GM12878 (cell line): ENCODE measurements at regions of chr19 and their contacts with region 1.

Region 1: DNA sequence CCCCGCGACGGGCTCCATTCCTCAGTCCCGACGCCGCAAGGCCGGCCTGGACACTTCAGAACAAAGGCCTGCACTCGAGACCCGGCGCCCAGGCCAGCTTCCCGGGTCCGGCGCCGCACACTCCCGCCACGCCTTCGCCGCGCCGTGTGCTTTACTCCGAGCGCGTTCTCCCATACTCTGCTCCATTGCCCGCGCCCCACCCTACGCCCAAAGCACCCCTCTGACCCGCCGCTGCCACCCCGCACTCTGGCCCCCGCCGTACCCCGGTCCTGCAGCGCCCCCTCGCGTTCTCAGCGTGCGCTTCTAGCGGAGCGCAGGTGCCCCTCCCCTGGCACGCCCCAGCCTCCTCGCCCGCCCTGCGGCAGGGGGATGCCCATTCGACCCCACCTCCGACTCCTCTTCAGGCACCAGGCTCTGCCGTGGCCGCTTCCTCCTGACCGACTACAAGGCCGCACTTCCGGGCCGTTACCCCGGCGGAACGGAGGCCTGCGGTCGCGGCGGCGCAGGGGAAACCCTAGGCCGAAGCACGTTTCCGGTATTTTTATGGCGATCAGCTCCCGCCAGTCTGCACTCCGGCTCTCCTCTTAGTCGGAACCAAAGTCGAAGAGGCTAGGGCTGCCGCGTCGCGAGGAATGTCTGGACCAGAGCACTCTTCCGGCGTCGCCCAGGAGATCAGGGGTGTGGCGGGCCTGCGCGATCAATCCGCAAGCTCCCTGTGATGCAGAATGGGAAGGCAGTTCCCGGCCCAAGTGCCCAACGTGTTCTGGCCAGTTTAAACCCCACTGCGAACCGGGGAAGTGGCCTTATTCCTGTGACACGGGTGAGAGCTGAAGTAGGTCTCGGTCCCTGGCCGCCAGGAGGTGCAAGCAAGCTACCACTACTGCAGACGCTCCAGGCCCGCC is at the start of gene ZBTB45:
- DNase-seq: peak; percentile 92
- ATAC-seq: peak; percentile 86
- H3K4me3 ChIP-seq: peak within 1 kb of the TSS; percentile 89
- H3K27ac ChIP-seq: peak within 1 kb of the TSS; percentile 88
- H3K4me1 ChIP-seq: peaks cover 22% of the 10 kb centered on the region
- H3K27me3 ChIP-seq: no peaks in the 10 kb centered on the region
- CTCF ChIP-seq: peak; percentile 79 to 91 (median 88)
- EP300 ChIP-seq: peak in 1 of 2 experiments; percentile 20; a peak in 1 of 4 replicates
- POLR2A ChIP-seq: peak; percentile 89
- RAD21 ChIP-seq: peak; percentile 80
- polyA plus RNA-seq, gene ZBTB45: 0.29 to 0.33 TPM

Region 2: GRCh38 chr19:58380722-58381466 is 138.7 kb before region 1 on chr19 and contains the start of gene ZNF837:
- CTCF ChIA-PET with region 1: interaction called, 5 read pairs
- POLR2A ChIA-PET with region 1: interaction called, 3 read pairs
- RAD21 ChIA-PET with region 1: interaction called, 5 read pairs
- SMC1A ChIA-PET with region 1: no interaction called
- in situ Hi-C with region 1: no loop called
- intact Hi-C with region 1: loop called (anchors 2 kb)
- DNase-seq: peak; percentile 99
- ATAC-seq: peak; percentile 90
- H3K4me3 ChIP-seq: peak within 1 kb of the TSS; percentile 87
- H3K27ac ChIP-seq: peak within 1 kb of the TSS; percentile 85
- H3K4me1 ChIP-seq: peaks cover 22% of the 10 kb centered on the region
- H3K27me3 ChIP-seq: no peaks in the 10 kb centered on the region
- CTCF ChIP-seq: no peak
- EP300 ChIP-seq: no peak
- POLR2A ChIP-seq: peak; percentile 87
- RAD21 ChIP-seq: no peak
- polyA plus RNA-seq, gene ZNF837: not detected

Region 3: DNA sequence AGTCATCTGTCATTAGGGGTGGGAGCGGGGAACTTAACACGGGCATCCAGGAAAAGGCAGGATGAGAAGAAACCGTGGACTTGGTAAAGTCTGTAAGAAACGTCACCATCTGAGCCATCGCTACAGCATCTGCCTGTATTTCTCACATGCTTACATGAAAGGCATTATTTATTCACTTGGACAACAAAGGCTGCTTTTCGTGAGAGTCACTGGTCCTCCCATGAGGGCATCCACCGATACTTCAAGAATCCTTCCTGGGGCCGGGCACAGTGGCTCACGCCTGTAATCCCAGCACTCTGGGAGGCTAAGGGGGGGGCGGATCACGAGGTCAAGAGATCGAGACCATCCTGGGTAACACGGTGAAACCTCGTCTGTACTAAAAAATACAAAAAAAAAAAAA is 27.3 kb before region 1 on chr19:
- CTCF ChIA-PET with region 1: interaction called, 18 read pairs
- POLR2A ChIA-PET with region 1: interaction called, 14 read pairs
- RAD21 ChIA-PET with region 1: interaction called, 9 read pairs
- SMC1A ChIA-PET with region 1: interaction called, 6 read pairs
- in situ Hi-C with region 1: no loop called
- intact Hi-C with region 1: no loop called
- DNase-seq: no peak
- ATAC-seq: no peak
- H3K4me3 ChIP-seq: no peak overlapping the region
- H3K27ac ChIP-seq: no peak overlapping the region
- H3K4me1 ChIP-seq: peaks cover 25% of the 10 kb centered on the region
- H3K27me3 ChIP-seq: no peaks in the 10 kb centered on the region
- CTCF ChIP-seq: no peak
- EP300 ChIP-seq: no peak
- POLR2A ChIP-seq: no peak
- RAD21 ChIP-seq: no peak

Region 4: DNA sequence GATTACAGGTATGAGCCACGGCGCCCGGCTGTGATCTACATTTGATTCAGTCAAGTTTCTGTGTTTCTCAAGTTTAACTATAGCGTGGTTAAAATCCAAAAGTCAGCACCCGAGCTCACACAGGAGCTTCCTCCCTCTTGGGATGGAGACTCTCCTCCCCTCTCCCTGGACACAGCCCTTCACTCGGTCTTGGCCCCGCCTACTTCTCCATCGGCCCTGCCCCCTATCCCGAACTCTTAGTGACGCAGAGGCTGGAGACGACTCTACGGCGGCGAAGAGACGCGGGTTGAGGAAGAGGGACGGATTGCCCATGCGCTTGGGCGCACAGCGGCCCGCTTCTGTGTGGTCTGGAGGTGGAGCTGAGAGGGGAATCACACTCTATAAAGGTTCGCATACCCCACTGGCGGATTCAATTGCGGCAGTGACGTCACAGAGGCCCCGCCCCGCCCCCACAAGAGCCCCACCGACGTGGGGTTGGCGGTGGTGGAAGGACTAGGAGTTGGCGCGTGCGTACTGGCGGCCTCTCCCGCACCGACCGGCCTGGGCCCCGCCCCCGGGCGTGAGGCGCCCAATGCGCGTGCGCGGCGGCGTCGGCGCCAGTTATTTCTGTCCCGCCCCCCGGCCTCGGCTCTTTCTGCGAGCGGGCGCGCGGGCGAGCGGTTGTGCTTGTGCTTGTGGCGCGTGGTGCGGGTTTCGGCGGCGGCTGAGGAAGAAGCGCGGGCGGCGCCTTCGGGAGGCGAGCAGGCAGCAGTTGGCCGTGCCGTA is 24.4 kb after region 1 on chr19 and contains the start of gene TRIM28:
- CTCF ChIA-PET with region 1: interaction called, 21 read pairs
- POLR2A ChIA-PET with region 1: interaction called, 15 read pairs
- RAD21 ChIA-PET with region 1: interaction called, 25 read pairs
- SMC1A ChIA-PET with region 1: interaction called, 14 read pairs
- in situ Hi-C with region 1: no loop called
- intact Hi-C with region 1: no loop called
- DNase-seq: peak; percentile 96
- ATAC-seq: peak; percentile 99
- H3K4me3 ChIP-seq: peak within 1 kb of the TSS; percentile 92
- H3K27ac ChIP-seq: peak within 1 kb of the TSS; percentile 89
- H3K4me1 ChIP-seq: peaks cover 8% of the 10 kb centered on the region
- H3K27me3 ChIP-seq: no peaks in the 10 kb centered on the region; a peak in 1 of 4 replicates
- CTCF ChIP-seq: no peak
- EP300 ChIP-seq: peak in 1 of 2 experiments; percentile 39; a peak in 1 of 4 replicates
- POLR2A ChIP-seq: peak; percentile 99
- RAD21 ChIP-seq: no peak
- polyA plus RNA-seq, gene TRIM28: 5.0 to 32.5 TPM

Region 5: GRCh38 chr19:58572818-58573657 is 53.4 kb after region 1 on chr19 and contains the start of gene MZF1:
- CTCF ChIA-PET with region 1: interaction called, 67 read pairs
- POLR2A ChIA-PET with region 1: interaction called, 24 read pairs
- RAD21 ChIA-PET with region 1: interaction called, 50 read pairs
- SMC1A ChIA-PET with region 1: interaction called, 43 read pairs
- in situ Hi-C with region 1: no loop called
- intact Hi-C with region 1: loop called (anchors 2 kb)
- DNase-seq: peak; percentile 99
- ATAC-seq: peak; percentile 73
- H3K4me3 ChIP-seq: peak within 1 kb of the TSS; percentile 82
- H3K27ac ChIP-seq: peak within 1 kb of the TSS; percentile 98
- H3K4me1 ChIP-seq: peaks cover 12% of the 10 kb centered on the region
- H3K27me3 ChIP-seq: no peaks in the 10 kb centered on the region
- CTCF ChIP-seq: 0 out of 6 replicates have a peak, but pooled peaks of 2 of the 3 experiments have one; percentile 10 to 16
- EP300 ChIP-seq: peak in 1 of 2 experiments; percentile 41; a peak in 2 of 4 replicates
- POLR2A ChIP-seq: peak; percentile 84
- RAD21 ChIP-seq: no peak
- polyA plus RNA-seq, gene MZF1: 0.38 to 0.64 TPM